Natural killer cell (primary cell): ENCODE measurements at regions of chr17 and their contacts with region 1.

Region 1: GRCh38 chr17:78745407-78746088 is 36.5 kb downstream of the CYTH1 start:
- DNase-seq: peak in 1 of 2 donors; percentile 85
- ATAC-seq: no peak
- H3K4me3 ChIP-seq: no peak overlapping the region
- H3K4me3 Mint-ChIP-seq: peak overlapping the region; percentile 80
- H3K27ac ChIP-seq: peak overlapping the region; percentile 93
- H3K27ac Mint-ChIP-seq: peak overlapping the region; percentile 93
- H3K4me1 ChIP-seq: peaks cover 83% of the 10 kb centered on the region
- H3K4me1 Mint-ChIP-seq: peaks cover 88 to 92% of the 10 kb centered on the region in 2 donors
- H3K27me3 ChIP-seq: no peaks in the 10 kb centered on the region
- H3K27me3 Mint-ChIP-seq: no peaks in the 10 kb centered on the region
- CTCF ChIP-seq: peak; percentile 73

Region 2: GRCh38 chr17:78674595-78675315 is 70.8 kb before region 1 on chr17:
- intact Hi-C with region 1: no loop called
- DNase-seq: no peak
- ATAC-seq: peak in 1 of 3 donors; percentile 24
- H3K4me3 ChIP-seq: no peak overlapping the region
- H3K4me3 Mint-ChIP-seq: no peak overlapping the region
- H3K27ac ChIP-seq: no peak overlapping the region
- H3K27ac Mint-ChIP-seq: peak overlapping the region; percentile 47 to 73
- H3K4me1 ChIP-seq: no peaks in the 10 kb centered on the region
- H3K4me1 Mint-ChIP-seq: peaks cover 7 to 30% of the 10 kb centered on the region in 2 donors
- H3K27me3 ChIP-seq: no peaks in the 10 kb centered on the region
- H3K27me3 Mint-ChIP-seq: no peaks in the 10 kb centered on the region
- CTCF ChIP-seq: no peak

Region 3: GRCh38 chr17:78708510-78708973 is 37.0 kb before region 1 on chr17:
- intact Hi-C with region 1: loop called (anchors 2 kb)
- DNase-seq: peak; percentile 41 to 81
- ATAC-seq: peak; percentile 83 to 87 (median 84)
- H3K4me3 ChIP-seq: no peak overlapping the region
- H3K4me3 Mint-ChIP-seq: no peak overlapping the region
- H3K27ac ChIP-seq: peak overlapping the region; percentile 42
- H3K27ac Mint-ChIP-seq: peak overlapping the region; percentile 70 to 75
- H3K4me1 ChIP-seq: peaks cover 38% of the 10 kb centered on the region
- H3K4me1 Mint-ChIP-seq: peaks cover 59 to 63% of the 10 kb centered on the region in 2 donors
- H3K27me3 ChIP-seq: no peaks in the 10 kb centered on the region
- H3K27me3 Mint-ChIP-seq: no peaks in the 10 kb centered on the region
- CTCF ChIP-seq: peak; percentile 75

Region 4: GRCh38 chr17:78729641-78730040 is 15.9 kb before region 1 on chr17:
- intact Hi-C with region 1: loop called (anchors 2 kb)
- DNase-seq: no peak
- ATAC-seq: no peak
- H3K4me3 ChIP-seq: no peak overlapping the region
- H3K4me3 Mint-ChIP-seq: peak overlapping the region; percentile 63
- H3K27ac ChIP-seq: peak overlapping the region; percentile 45
- H3K27ac Mint-ChIP-seq: peak overlapping the region; percentile 93 to 94
- H3K4me1 ChIP-seq: peaks cover 82% of the 10 kb centered on the region
- H3K4me1 Mint-ChIP-seq: peaks cover 88 to 90% of the 10 kb centered on the region in 2 donors
- H3K27me3 ChIP-seq: no peaks in the 10 kb centered on the region
- H3K27me3 Mint-ChIP-seq: no peaks in the 10 kb centered on the region
- CTCF ChIP-seq: no peak

Region 5: DNA sequence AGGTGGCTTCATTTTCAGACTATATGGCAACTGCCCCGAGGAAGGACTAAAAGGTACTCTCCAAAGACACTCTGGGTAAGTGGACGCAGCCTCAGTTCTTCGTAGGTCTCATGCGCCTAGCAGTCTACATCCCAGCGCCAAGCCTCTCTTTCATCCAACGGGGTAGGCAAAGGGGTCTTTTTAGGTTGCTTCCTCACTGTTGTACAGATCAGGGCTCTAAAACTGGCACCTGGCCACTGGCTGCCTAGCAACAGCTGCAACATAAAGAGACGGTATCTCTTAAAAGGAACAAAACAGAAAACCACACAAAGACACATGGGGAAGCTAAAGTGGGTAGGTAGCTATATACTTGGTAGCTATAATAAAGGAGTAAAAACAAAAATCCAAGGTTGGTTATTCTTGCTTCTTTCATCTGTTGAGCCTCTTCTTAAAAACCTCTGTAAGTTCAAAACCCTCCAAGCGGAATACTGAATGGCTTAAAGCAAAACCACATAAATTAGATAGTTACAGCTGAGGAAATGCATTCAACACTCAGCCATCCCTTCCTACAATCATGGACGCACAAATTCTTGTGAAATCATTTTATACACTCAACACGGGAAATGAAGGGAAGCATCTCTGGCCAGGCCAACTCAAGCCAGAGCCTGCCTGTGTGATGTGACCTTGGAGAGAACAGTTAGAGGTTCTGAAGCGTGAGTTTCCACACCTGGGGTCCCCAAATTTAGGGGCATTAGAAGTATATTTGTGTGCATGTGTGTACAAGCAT is 13.8 kb after region 1 on chr17:
- intact Hi-C with region 1: loop called (anchors 1 kb)
- DNase-seq: peak; percentile 67 to 94
- ATAC-seq: peak; percentile 66 to 85 (median 79)
- H3K4me3 ChIP-seq: peak overlapping the region; percentile 2
- H3K4me3 Mint-ChIP-seq: peak overlapping the region; percentile 73
- H3K27ac ChIP-seq: peak overlapping the region; percentile 98
- H3K27ac Mint-ChIP-seq: peak overlapping the region; percentile 93 to 96
- H3K4me1 ChIP-seq: peaks cover 82% of the 10 kb centered on the region
- H3K4me1 Mint-ChIP-seq: peaks cover 55 to 77% of the 10 kb centered on the region in 2 donors
- H3K27me3 ChIP-seq: no peaks in the 10 kb centered on the region
- H3K27me3 Mint-ChIP-seq: no peaks in the 10 kb centered on the region
- CTCF ChIP-seq: no peak

Region 6: GRCh38 chr17:78774956-78775571 is 29.5 kb after region 1 on chr17:
- intact Hi-C with region 1: loop called (anchors 2 kb)
- DNase-seq: peak; percentile 64 to 75
- ATAC-seq: peak; percentile 58 to 71 (median 68)
- H3K4me3 ChIP-seq: peak overlapping the region; percentile 28
- H3K4me3 Mint-ChIP-seq: peak overlapping the region; percentile 94
- H3K27ac ChIP-seq: peak overlapping the region; percentile 86
- H3K27ac Mint-ChIP-seq: peak overlapping the region in 1 of 2 donors; percentile 100
- H3K4me1 ChIP-seq: peaks cover 92% of the 10 kb centered on the region
- H3K4me1 Mint-ChIP-seq: peaks cover 54 to 61% of the 10 kb centered on the region in 2 donors
- H3K27me3 ChIP-seq: no peaks in the 10 kb centered on the region
- H3K27me3 Mint-ChIP-seq: no peaks in the 10 kb centered on the region
- CTCF ChIP-seq: no peak